ENCODE measurements at regions of chr13 and their contacts with region 1.

Region 1: GRCh38 chr13:74287724-74288169 is 153.5 kb upstream of the KLF12 start:
- DNase-seq: peak; percentile 64 to 74
- H3K4me3 ChIP-seq: no peak overlapping the region
- H3K4me3 Mint-ChIP-seq: peak overlapping the region; percentile 63
- H3K27ac Mint-ChIP-seq: peak overlapping the region; percentile 96
- H3K4me1 ChIP-seq: peaks cover 10% of the 10 kb centered on the region
- H3K4me1 Mint-ChIP-seq: peaks cover 26% of the 10 kb centered on the region
- H3K27me3 ChIP-seq: no peaks in the 10 kb centered on the region
- H3K27me3 Mint-ChIP-seq: no peaks in the 10 kb centered on the region
- CTCF ChIP-seq: no peak

Region 2: DNA sequence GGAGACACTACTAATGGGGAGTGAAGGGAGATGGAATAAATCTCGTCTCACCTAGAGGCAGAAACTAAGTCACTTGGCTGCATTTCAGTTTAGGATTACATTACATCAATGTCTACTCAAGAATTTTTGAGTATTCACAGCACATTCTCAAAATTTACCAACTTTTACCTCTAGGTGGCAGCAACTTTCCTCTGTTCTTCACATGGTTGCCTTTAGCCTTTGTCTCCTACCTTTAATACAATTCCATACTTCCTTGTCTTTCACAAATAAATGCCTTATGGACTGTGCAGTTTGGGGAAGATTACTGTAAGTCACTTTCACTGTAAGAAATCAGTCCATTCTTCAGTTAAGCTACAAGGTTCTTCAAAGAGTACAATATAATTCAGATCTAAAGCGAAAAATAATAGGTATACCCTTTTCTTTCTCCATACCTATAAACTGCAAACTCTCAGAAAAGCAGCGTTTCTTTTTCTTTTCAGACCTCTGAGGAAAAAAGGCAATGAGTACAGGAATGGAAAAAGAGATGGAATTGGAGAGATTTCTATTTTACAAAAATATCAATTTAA is 532.9 kb before region 1 on chr13:
- CTCF ChIA-PET with region 1: interaction called, 6 read pairs
- POLR2A ChIA-PET with region 1: no interaction called
- intact Hi-C with region 1: loop called (anchors 1 kb)
- DNase-seq: peak in 1 of 2 experiments; percentile 73
- H3K4me3 ChIP-seq: no peak overlapping the region
- H3K4me3 Mint-ChIP-seq: no peak overlapping the region
- H3K27ac Mint-ChIP-seq: peak overlapping the region; percentile 15
- H3K4me1 ChIP-seq: no peaks in the 10 kb centered on the region
- H3K4me1 Mint-ChIP-seq: no peaks in the 10 kb centered on the region
- H3K27me3 ChIP-seq: no peaks in the 10 kb centered on the region
- H3K27me3 Mint-ChIP-seq: no peaks in the 10 kb centered on the region
- CTCF ChIP-seq: peak; percentile 59 to 84

Region 3: DNA sequence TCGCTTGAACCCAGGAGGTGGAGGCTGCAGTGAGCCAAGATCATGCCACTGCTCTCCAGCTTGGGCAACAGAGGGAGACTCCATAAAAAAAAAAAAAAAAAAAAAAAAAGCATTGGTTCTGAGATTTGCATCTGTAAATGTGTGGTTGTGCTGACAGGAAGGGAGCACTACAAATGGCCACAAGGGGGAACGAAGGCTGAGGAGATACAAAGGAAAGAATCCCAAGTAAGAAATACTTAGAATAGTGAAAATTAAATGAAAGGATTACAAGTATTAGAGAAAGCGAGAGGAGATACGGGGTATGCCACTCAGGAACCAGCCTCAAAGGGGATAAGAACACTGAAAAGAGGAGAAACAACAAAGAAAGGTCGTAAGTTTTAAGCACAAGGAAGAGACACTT is 438.5 kb before region 1 on chr13:
- CTCF ChIA-PET with region 1: interaction called, 15 read pairs
- POLR2A ChIA-PET with region 1: no interaction called
- intact Hi-C with region 1: loop called (anchors 1 kb)
- DNase-seq: peak; percentile 52 to 56
- H3K4me3 ChIP-seq: no peak overlapping the region
- H3K4me3 Mint-ChIP-seq: no peak overlapping the region
- H3K27ac Mint-ChIP-seq: no peak overlapping the region
- H3K4me1 ChIP-seq: no peaks in the 10 kb centered on the region
- H3K4me1 Mint-ChIP-seq: peaks cover 7% of the 10 kb centered on the region
- H3K27me3 ChIP-seq: no peaks in the 10 kb centered on the region
- H3K27me3 Mint-ChIP-seq: no peaks in the 10 kb centered on the region
- CTCF ChIP-seq: peak; percentile 32 to 68

Region 4: DNA sequence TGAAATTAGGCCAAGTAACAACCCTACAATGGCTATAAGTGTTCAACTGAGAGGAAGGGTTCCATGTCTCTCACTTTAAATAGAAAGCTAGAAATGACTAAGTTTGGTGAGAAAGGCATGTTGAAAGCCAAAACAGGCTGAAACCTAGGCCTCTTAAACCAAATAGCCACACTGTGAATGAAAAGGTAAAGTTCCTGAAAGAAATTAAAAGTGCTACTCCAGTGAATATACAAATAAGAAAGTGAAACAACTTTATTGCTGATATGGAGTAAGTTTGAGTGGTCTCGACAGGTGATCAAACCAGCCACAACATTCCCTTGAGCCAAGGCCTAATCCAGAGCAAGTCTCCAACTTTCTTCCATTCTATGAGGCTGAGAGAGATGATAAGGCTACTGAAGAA is 363.1 kb before region 1 on chr13:
- CTCF ChIA-PET with region 1: no interaction called
- POLR2A ChIA-PET with region 1: no interaction called
- intact Hi-C with region 1: no loop called
- DNase-seq: no peak
- H3K4me3 ChIP-seq: no peak overlapping the region
- H3K4me3 Mint-ChIP-seq: no peak overlapping the region
- H3K27ac Mint-ChIP-seq: no peak overlapping the region
- H3K4me1 ChIP-seq: peaks cover 5% of the 10 kb centered on the region; the same call in 1 of the 2 replicates
- H3K4me1 Mint-ChIP-seq: peaks cover 18% of the 10 kb centered on the region
- H3K27me3 ChIP-seq: no peaks in the 10 kb centered on the region
- H3K27me3 Mint-ChIP-seq: no peaks in the 10 kb centered on the region
- CTCF ChIP-seq: no peak

Region 5: DNA sequence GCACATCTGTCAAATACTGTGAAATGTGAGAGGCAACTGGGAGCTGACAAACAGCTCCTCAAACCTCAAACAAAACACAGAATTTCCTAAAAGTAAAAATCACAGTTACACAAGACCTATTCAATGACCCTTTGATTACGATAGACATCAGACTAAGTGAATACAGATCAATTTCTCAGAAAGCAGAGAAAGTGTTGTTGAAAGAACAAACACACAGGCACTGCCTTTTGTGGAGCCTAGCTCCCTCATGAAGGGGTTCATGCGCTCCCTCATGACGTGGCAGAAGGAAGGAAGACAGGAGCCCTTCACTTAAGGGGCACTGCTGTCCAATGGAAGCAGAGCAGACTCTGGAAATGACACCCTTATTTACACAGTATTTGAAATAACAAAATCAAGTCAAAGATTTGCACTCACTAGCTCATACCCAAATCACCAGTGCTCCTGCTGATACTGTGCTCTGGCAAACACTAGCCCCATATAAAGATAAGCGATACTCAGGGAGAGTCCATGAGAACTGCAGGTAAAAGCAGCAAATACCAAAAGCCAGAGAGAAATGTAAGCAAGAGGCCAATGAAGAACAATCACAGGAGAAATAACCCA is 298.4 kb before region 1 on chr13:
- CTCF ChIA-PET with region 1: interaction called, 11 read pairs
- POLR2A ChIA-PET with region 1: no interaction called
- intact Hi-C with region 1: no loop called
- DNase-seq: peak in 1 of 2 experiments; percentile 17
- H3K4me3 ChIP-seq: no peak overlapping the region
- H3K4me3 Mint-ChIP-seq: peak overlapping the region; percentile 22
- H3K27ac Mint-ChIP-seq: peak overlapping the region; percentile 75
- H3K4me1 ChIP-seq: peaks cover 13% of the 10 kb centered on the region
- H3K4me1 Mint-ChIP-seq: peaks cover 26% of the 10 kb centered on the region
- H3K27me3 ChIP-seq: no peaks in the 10 kb centered on the region
- H3K27me3 Mint-ChIP-seq: no peaks in the 10 kb centered on the region
- CTCF ChIP-seq: no peak

Region 6: DNA sequence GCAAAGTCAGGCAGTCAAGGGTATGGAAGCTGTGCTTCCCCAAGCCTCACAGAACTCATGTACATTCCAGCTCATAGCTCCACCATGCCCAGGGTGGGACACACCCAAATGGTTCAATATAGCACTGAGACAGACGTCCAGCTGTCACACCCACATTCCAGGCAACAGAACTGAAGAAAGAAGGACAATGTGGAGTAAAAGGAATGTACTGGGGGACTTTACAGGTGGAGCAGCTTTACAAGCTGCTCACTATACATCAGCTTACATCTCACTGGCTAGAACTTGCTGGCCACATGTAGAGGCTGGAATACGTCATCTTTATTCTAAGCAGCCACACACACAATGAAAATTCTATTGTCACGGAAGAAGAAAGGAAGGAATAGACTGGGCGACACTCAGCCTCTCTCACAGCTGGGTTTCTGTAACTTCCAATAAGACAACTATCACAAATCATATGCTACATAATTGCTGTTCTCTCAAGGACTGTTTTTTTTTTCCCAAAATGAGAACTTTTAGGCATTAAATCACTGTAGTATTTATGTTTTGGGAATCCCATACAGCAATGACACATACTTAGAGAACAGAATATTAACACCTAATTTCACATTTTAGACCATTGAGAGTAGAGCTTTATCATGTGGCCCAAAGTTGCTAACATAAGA is 239.7 kb before region 1 on chr13:
- CTCF ChIA-PET with region 1: interaction called, 11 read pairs
- POLR2A ChIA-PET with region 1: no interaction called
- intact Hi-C with region 1: no loop called
- DNase-seq: peak; percentile 74 to 83
- H3K4me3 ChIP-seq: no peak overlapping the region
- H3K4me3 Mint-ChIP-seq: peak overlapping the region; percentile 54
- H3K27ac Mint-ChIP-seq: peak overlapping the region; percentile 88
- H3K4me1 ChIP-seq: peaks cover 16% of the 10 kb centered on the region
- H3K4me1 Mint-ChIP-seq: peaks cover 28% of the 10 kb centered on the region
- H3K27me3 ChIP-seq: no peaks in the 10 kb centered on the region
- H3K27me3 Mint-ChIP-seq: no peaks in the 10 kb centered on the region
- CTCF ChIP-seq: no peak

Region 7: DNA sequence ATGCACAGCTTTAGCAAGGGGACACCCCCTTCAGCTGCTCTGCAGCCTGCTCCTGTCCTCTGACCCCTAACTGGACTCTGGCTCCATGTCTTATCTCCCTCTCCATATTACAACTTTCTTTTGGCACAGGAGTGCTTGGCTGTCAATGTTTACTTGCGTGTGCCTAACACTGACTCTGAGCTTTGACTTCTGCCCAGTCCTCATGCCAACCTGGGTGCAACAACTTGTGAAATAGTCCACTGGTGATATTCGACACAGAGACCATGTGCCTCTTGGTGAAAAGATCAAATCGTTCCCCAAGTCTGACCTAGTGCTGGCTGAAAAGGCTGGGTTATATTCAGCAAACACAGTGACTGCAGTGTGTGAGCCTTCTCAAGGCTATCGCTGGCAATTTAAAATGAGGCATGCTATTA is 119.5 kb before region 1 on chr13:
- CTCF ChIA-PET with region 1: interaction called, 4 read pairs
- POLR2A ChIA-PET with region 1: no interaction called
- intact Hi-C with region 1: loop called (anchors 10 kb)
- DNase-seq: no peak
- H3K4me3 ChIP-seq: no peak overlapping the region
- H3K4me3 Mint-ChIP-seq: no peak overlapping the region
- H3K27ac Mint-ChIP-seq: no peak overlapping the region
- H3K4me1 ChIP-seq: no peaks in the 10 kb centered on the region
- H3K4me1 Mint-ChIP-seq: peaks cover 10% of the 10 kb centered on the region
- H3K27me3 ChIP-seq: no peaks in the 10 kb centered on the region
- H3K27me3 Mint-ChIP-seq: no peaks in the 10 kb centered on the region
- CTCF ChIP-seq: no peak

Region 8: GRCh38 chr13:74250738-74251190 is 37.0 kb before region 1 on chr13:
- CTCF ChIA-PET with region 1: no interaction called
- POLR2A ChIA-PET with region 1: no interaction called
- intact Hi-C with region 1: no loop called
- DNase-seq: no peak
- H3K4me3 ChIP-seq: no peak overlapping the region
- H3K4me3 Mint-ChIP-seq: no peak overlapping the region
- H3K27ac Mint-ChIP-seq: no peak overlapping the region
- H3K4me1 ChIP-seq: no peaks in the 10 kb centered on the region
- H3K4me1 Mint-ChIP-seq: no peaks in the 10 kb centered on the region
- H3K27me3 ChIP-seq: no peaks in the 10 kb centered on the region
- H3K27me3 Mint-ChIP-seq: no peaks in the 10 kb centered on the region
- CTCF ChIP-seq: no peak